ENCODE measurements at regions of chr20 and their contacts with region 1.

Region 1: GRCh38 chr20:36886859-36887751 is 11.2 kb downstream of the TLDC2 start:
- DNase-seq: peak; percentile 61 to 70
- ATAC-seq: peak; percentile 70 to 83
- H3K4me3 ChIP-seq: no peak overlapping the region
- H3K27ac ChIP-seq: peak overlapping the region in 1 of 4 donors; percentile 12
- H3K4me1 ChIP-seq: peaks cover 0 to 5% of the 10 kb centered on the region in 2 donors
- H3K27me3 ChIP-seq: no peaks in the 10 kb centered on the region
- CTCF ChIP-seq: peak; percentile 77 to 93 (median 85)
- POLR2A ChIP-seq: no peak

Region 2: GRCh38 chr20:36541227-36541763 is 345.8 kb before region 1 on chr20 and contains the start of gene MYL9:
- in situ Hi-C with region 1: no loop called
- intact Hi-C with region 1: no loop called
- DNase-seq: peak; percentile 51 to 71
- ATAC-seq: peak; percentile 27 to 54
- H3K4me3 ChIP-seq: peak within 1 kb of the TSS; percentile 50 to 70 (median 66)
- H3K27ac ChIP-seq: peak within 1 kb of the TSS; percentile 71 to 92 (median 88)
- H3K4me1 ChIP-seq: peaks cover 9 to 14% of the 10 kb centered on the region in 2 donors
- H3K27me3 ChIP-seq: peaks cover 0 to 6% (median 4%) of the 10 kb centered on the region in 3 donors
- CTCF ChIP-seq: no peak
- POLR2A ChIP-seq: peak; percentile 45 to 59
- total RNA-seq, gene MYL9: 7.3 to 59.4 (median 20.8) TPM

Region 3: DNA sequence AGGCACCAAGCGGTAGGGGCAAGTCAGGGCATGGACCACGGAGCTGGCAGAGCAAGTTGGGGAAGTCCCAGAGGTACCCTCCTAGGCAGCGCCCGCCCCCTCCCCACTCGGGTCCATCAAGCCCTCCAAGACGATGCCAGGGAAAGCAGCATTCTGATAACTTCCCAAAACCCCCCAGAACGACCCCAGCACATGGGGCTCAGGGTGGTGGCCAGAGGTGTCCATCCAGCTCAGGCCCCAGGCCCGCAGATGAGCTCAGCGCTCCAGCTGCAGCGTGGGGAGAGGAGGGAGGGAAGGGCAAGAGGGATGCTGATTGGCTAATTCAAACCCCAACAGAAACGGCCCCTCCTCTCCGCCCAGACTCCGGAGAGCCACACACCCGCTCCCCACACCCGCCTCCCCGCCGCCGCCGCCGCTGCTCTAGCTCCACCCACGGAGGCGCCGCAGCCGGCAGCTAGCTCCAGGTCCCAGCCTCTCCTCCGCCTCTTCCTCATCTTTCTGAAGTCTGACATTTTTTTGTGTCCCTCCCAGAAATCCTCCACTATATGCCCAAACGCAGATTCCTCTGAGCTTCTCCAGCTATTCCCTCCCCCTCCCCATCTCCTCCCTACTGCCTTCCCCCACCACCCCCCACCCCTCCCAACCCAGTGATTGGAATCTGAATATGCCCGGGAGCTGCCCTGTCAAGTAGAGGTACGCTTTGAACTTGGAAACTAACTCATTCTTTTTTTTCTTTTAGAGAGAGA is 51.5 kb before region 1 on chr20:
- in situ Hi-C with region 1: no loop called
- intact Hi-C with region 1: loop called (anchors 2 kb)
- DNase-seq: peak; percentile 81 to 84
- ATAC-seq: peak; percentile 84 to 87
- H3K4me3 ChIP-seq: peak overlapping the region in 3 of 4 donors; percentile 34 to 46 (median 34)
- H3K27ac ChIP-seq: peak overlapping the region; percentile 62 to 72 (median 70)
- H3K4me1 ChIP-seq: peaks cover 37 to 45% of the 10 kb centered on the region in 2 donors
- H3K27me3 ChIP-seq: no peaks in the 10 kb centered on the region
- CTCF ChIP-seq: no peak
- POLR2A ChIP-seq: peak; percentile 32 to 58

Region 4: GRCh38 chr20:37020636-37021035 is 133.5 kb after region 1 on chr20:
- in situ Hi-C with region 1: no loop called
- intact Hi-C with region 1: no loop called
- DNase-seq: no peak
- ATAC-seq: no peak
- H3K4me3 ChIP-seq: no peak overlapping the region
- H3K27ac ChIP-seq: no peak overlapping the region
- H3K4me1 ChIP-seq: no peaks in the 10 kb centered on the region
- H3K27me3 ChIP-seq: no peaks in the 10 kb centered on the region
- CTCF ChIP-seq: no peak
- POLR2A ChIP-seq: no peak